Colonic mucosa (tissue), 4 donors: ENCODE measurements at regions of chr22 and their contacts with region 1.

Region 1: DNA sequence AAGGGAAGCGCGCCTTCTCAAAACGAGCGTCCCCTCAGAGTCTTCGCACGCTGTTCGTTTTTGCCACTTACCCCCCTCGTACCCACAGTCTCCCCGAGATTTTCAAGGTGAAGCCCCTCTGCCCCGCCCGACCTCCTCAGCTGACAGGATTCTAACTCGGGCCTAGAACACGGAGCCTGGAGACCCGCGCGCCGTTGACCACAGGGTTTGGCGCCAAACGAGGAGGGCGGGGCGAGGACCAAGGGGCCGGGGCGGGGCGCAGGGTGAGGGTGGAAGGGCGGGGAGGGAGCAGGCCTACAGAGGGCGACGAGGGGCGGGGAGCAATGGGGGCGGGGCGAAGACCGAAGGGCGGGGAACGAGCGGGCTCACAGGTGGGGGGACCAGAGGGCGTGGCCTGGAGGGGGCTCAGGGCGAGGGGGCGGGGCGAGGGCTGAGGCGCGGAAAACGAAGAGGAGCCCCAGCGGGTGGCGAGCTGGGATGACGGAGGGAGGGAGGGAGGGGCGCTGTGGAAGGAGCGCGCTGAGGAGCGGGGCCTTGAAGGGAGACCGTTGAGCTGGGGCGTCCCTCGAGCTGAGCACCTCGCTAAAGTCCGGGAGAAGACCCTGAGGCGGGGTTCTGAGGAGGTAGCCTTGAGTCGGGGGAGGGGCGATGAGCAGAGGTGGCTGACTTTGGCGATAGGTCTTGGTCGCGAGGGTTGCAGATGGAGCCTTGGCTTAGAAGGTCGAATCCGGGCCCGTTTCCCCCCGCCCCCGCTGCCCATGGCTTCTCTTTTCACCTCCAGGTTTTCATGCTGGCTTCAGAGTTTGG is at the start of gene DMC1:
- DNase-seq: peak; percentile 98
- H3K4me3 ChIP-seq: peak within 1 kb of the TSS; percentile 57
- H3K27ac ChIP-seq: no peak within 1 kb of the TSS
- H3K4me1 ChIP-seq: no peaks in the 10 kb centered on the region
- H3K27me3 ChIP-seq: no peaks in the 10 kb centered on the region
- CTCF ChIP-seq: no peak
- total RNA-seq, gene DMC1: 2.0 to 3.0 TPM

Region 2: GRCh38 chr22:38415561-38416321 is 154.4 kb before region 1 on chr22:
- intact Hi-C with region 1: loop called (anchors 5 kb)
- DNase-seq: no peak
- H3K4me3 ChIP-seq: no peak overlapping the region
- H3K27ac ChIP-seq: no peak overlapping the region
- H3K4me1 ChIP-seq: peaks cover 8% of the 10 kb centered on the region
- H3K27me3 ChIP-seq: no peaks in the 10 kb centered on the region
- CTCF ChIP-seq: no peak

Region 3: GRCh38 chr22:38724926-38725571 is 154.9 kb after region 1 on chr22:
- intact Hi-C with region 1: no loop called
- DNase-seq: no peak
- H3K4me3 ChIP-seq: no peak overlapping the region
- H3K27ac ChIP-seq: no peak overlapping the region
- H3K4me1 ChIP-seq: no peaks in the 10 kb centered on the region
- H3K27me3 ChIP-seq: no peaks in the 10 kb centered on the region
- CTCF ChIP-seq: peak; percentile 43